Activated CD4-positive, alpha-beta memory T cell treated with anti-CD3 and anti-CD28 coated beads for 36 hours (primary cell): ENCODE measurements at regions of chr4 and their contacts with region 1.

Region 1: GRCh38 chr4:3880615-3881120 is 114.5 kb downstream of the ADRA2C start:
- DNase-seq: peak; percentile 82
- H3K4me3 Mint-ChIP-seq: no peak overlapping the region
- H3K27ac Mint-ChIP-seq: no peak overlapping the region
- H3K4me1 Mint-ChIP-seq: peaks cover 13% of the 10 kb centered on the region
- H3K27me3 Mint-ChIP-seq: peaks cover 34% of the 10 kb centered on the region

Region 2: DNA sequence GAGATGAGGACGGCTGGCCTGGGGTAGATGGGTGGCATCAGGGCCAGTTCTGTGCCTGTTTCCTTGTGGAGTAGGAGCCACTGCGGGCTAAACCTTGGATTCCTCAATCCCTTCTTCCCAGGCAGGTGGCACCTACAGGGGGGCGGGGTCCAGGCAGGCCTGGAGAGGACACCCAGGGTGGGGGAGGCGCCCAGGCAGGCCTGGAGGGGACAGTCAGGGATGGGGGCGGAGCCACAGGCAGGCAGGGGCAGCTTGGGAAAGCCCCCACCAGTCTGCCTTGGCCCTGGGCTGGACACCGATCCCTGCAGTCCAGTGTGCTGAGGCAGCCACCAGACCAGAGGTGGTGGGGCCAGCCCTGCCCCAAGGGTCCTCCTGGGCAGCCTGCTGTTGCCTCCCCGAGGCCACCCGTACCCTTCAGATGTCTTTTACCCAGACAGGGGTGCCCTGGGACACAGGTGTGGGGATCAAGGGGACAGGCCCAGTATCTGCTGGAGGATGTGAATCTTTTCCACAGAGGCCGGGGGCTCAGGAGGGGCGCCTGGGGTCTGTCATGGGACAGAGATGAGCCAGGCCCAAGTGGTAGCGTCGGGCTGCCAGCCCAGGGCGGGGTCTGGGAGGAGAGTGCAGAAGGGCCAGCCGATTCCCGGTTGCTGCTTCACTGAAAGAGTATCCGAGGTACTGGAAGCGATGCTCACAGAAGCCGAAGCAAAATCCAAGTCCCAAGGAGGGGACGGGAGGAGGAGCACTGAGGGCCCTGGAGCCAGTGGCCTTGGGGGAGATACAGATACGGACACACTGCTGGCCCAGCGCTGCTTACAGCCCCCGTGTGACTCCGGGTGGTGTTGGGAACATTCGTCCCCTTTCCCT is 382.9 kb before region 1 on chr4:
- CTCF ChIA-PET with region 1: no interaction called
- POLR2A ChIA-PET with region 1: no interaction called
- intact Hi-C with region 1: no loop called
- DNase-seq: no peak
- H3K4me3 Mint-ChIP-seq: no peak overlapping the region
- H3K27ac Mint-ChIP-seq: no peak overlapping the region
- H3K4me1 Mint-ChIP-seq: no peaks in the 10 kb centered on the region
- H3K27me3 Mint-ChIP-seq: peaks cover 7% of the 10 kb centered on the region

Region 3: DNA sequence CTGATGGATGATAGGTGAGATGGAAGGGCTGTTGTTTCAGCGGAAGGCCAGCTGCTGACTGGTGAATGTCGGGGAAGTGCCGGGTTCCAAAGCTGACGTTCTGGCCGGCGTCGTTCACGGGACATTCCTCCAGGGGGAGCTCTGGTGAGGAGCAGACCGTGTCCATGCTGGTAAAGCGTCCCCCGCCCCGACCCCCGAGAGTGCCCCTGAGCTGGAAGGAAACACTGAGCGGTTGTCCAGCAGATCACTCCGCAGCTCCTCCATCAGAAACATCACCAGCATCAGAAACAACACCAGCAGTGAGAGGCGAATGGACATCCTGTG is 133.1 kb before region 1 on chr4:
- CTCF ChIA-PET with region 1: interaction called, 14 read pairs
- POLR2A ChIA-PET with region 1: no interaction called
- intact Hi-C with region 1: no loop called
- DNase-seq: peak; percentile 16
- H3K4me3 Mint-ChIP-seq: no peak overlapping the region
- H3K27ac Mint-ChIP-seq: no peak overlapping the region
- H3K4me1 Mint-ChIP-seq: no peaks in the 10 kb centered on the region
- H3K27me3 Mint-ChIP-seq: peaks cover 51% of the 10 kb centered on the region